ENCODE measurements at regions of chr16 and their contacts with region 1.

Region 1: DNA sequence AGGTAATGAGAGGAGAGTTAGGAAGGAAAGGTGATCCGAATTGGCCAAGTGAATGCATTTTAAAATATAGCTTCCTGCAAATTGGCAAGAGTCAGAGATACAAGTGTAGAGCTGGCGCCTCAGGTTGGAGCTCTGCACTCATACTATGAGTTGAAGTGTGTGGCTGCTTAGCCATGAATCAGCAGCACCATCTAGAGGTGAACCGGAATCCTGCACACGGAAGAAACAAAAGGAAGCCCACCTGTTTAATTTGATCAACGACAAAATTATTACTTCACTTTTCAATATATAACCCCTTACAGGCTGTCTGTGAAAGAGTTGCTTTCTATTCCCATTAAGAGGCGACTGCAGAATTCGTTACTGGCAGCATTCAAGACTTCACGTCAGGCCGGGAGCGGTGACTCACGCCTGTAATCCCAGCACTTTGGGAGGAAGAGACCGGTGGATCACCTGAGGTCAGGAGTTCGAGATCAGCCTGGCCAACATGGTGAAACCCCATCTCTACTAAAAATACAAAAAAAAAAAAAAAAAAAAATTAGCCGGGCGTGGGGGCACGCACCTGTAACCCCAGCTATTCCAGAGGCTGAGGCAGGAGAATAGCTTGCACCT is 1253.7 kb upstream of the CDH8 start:
- DNase-seq: no peak
- H3K4me3 ChIP-seq: no peak overlapping the region
- H3K27ac ChIP-seq: no peak overlapping the region
- H3K4me1 ChIP-seq: no peaks in the 10 kb centered on the region
- H3K27me3 ChIP-seq: no peaks in the 10 kb centered on the region
- CTCF ChIP-seq: no peak
- EP300 ChIP-seq: no peak
- POLR2A ChIP-seq: no peak

Region 2: DNA sequence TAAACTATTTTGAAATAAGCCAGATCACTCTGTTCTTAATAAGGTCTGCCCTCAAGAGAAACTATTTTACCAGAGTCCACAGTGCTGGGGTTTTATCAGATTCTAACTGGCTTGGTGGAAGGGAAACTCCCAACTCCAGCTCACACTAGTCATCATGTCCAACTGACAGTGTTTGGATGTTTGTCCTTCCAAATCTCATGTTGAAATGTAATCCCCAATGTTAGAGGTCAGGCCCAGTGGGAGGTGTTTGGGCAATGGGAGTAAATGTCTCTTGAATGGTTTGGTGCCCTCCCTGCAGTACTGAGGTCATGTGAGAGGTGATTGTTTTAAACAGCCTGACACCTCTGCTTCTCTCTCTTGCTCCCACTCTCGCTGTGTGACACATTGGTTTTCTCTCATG is 47.3 kb after region 1 on chr16:
- intact Hi-C with region 1: no loop called
- DNase-seq: no peak
- H3K4me3 ChIP-seq: no peak overlapping the region
- H3K27ac ChIP-seq: no peak overlapping the region
- H3K4me1 ChIP-seq: no peaks in the 10 kb centered on the region
- H3K27me3 ChIP-seq: no peaks in the 10 kb centered on the region
- CTCF ChIP-seq: no peak
- EP300 ChIP-seq: no peak
- POLR2A ChIP-seq: no peak

Region 3: GRCh38 chr16:63349961-63350360 is 60.0 kb after region 1 on chr16:
- intact Hi-C with region 1: loop called in 1 of 4 experiments (anchors 10 kb)
- DNase-seq: no peak
- H3K4me3 ChIP-seq: no peak overlapping the region
- H3K27ac ChIP-seq: no peak overlapping the region
- H3K4me1 ChIP-seq: no peaks in the 10 kb centered on the region
- H3K27me3 ChIP-seq: no peaks in the 10 kb centered on the region
- CTCF ChIP-seq: no peak
- EP300 ChIP-seq: no peak
- POLR2A ChIP-seq: no peak